ENCODE measurements at regions of chr6 and their contacts with region 1.

Region 1: GRCh38 chr6:41591859-41592502 is 45.8 kb downstream of the FOXP4 start:
- DNase-seq: peak; percentile 87
- ATAC-seq: peak; percentile 85
- H3K4me3 Mint-ChIP-seq: no peak overlapping the region
- H3K27ac Mint-ChIP-seq: no peak overlapping the region
- H3K4me1 Mint-ChIP-seq: peaks cover 3% of the 10 kb centered on the region
- H3K27me3 Mint-ChIP-seq: no peaks in the 10 kb centered on the region

Region 2: GRCh38 chr6:41463062-41463930 is 128.7 kb before region 1 on chr6:
- CTCF ChIA-PET with region 1: interaction called, 6 read pairs
- POLR2A ChIA-PET with region 1: no interaction called
- intact Hi-C with region 1: loop called (anchors 1 to 2 kb)
- DNase-seq: peak; percentile 53
- ATAC-seq: no peak
- H3K4me3 Mint-ChIP-seq: no peak overlapping the region
- H3K27ac Mint-ChIP-seq: no peak overlapping the region
- H3K4me1 Mint-ChIP-seq: no peaks in the 10 kb centered on the region
- H3K27me3 Mint-ChIP-seq: peaks cover 33% of the 10 kb centered on the region

Region 3: GRCh38 chr6:41505122-41506049 is 86.6 kb before region 1 on chr6:
- CTCF ChIA-PET with region 1: no interaction called
- POLR2A ChIA-PET with region 1: no interaction called
- intact Hi-C with region 1: loop called in 1 of 2 experiments (anchors 5 kb)
- DNase-seq: peak; percentile 52
- ATAC-seq: peak; percentile 57
- H3K4me3 Mint-ChIP-seq: no peak overlapping the region
- H3K27ac Mint-ChIP-seq: no peak overlapping the region
- H3K4me1 Mint-ChIP-seq: peaks cover 13% of the 10 kb centered on the region
- H3K27me3 Mint-ChIP-seq: peaks cover 52% of the 10 kb centered on the region

Region 4: DNA sequence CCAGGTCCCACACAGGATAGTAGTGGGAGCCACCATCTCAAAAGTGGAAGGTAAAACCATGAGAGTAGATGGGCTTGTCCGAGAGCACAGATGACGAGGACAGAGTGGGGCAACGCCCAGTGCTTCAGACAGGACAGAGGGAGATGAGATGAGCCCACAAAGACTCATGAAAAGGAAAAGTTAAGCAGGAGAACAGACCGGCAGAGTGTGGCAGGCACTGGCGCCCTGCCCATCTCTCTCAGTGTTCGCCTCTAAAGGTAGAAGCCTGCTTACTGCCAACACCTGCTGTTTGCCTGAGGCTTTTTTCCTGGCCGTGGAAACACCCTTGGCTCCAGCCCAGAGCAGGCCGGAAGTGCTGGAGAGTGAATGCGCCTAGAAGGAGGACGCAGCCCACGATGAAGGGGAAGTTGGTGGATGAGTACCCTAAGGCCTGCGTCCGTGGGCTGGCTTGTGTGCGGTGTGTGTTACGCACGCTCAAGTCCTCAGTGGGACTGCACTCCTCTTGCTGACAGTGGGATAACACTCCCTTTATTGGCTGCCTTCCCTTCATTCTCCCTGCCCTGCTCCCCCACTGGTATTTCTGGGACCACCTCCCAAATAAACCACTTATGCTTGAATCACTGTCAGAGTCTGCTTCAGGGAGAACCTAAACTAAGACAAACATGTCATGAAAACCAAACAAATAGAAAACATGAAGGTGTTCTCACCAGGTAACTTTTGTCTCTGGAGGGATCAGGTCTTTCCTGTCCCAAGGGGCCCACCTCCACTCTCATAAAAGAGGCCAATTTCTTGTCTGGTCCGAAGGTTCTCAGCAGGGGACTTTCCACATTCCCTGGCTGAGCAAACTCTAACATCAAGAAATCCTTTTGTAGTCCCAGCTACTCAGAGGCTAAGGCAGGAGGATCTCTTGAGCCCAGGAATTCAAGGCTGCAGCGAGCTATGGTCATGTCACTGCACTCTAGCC is 54.9 kb before region 1 on chr6:
- CTCF ChIA-PET with region 1: no interaction called
- POLR2A ChIA-PET with region 1: no interaction called
- intact Hi-C with region 1: no loop called
- DNase-seq: no peak
- ATAC-seq: no peak
- H3K4me3 Mint-ChIP-seq: no peak overlapping the region
- H3K27ac Mint-ChIP-seq: no peak overlapping the region
- H3K4me1 Mint-ChIP-seq: peaks cover 26% of the 10 kb centered on the region
- H3K27me3 Mint-ChIP-seq: peaks cover 10% of the 10 kb centered on the region

Region 5: GRCh38 chr6:41697861-41698781 is 106.1 kb after region 1 on chr6:
- CTCF ChIA-PET with region 1: no interaction called
- POLR2A ChIA-PET with region 1: no interaction called
- intact Hi-C with region 1: no loop called
- DNase-seq: no peak
- ATAC-seq: no peak
- H3K4me3 Mint-ChIP-seq: no peak overlapping the region
- H3K27ac Mint-ChIP-seq: no peak overlapping the region
- H3K4me1 Mint-ChIP-seq: no peaks in the 10 kb centered on the region
- H3K27me3 Mint-ChIP-seq: no peaks in the 10 kb centered on the region

Measured in activated CD4-positive, alpha-beta T cell treated with anti-CD3 and anti-CD28 coated beads for 36 hours (primary cell).